HepG2 (cell line): ENCODE measurements at regions of chr19 and their contacts with region 1.

Region 1: GRCh38 chr19:5048091-5048726 is 79.3 kb downstream of the KDM4B start:
- DNase-seq: peak; percentile 27
- ATAC-seq: peak; percentile 75
- H3K4me3 ChIP-seq: no peak overlapping the region
- H3K27ac ChIP-seq: no peak overlapping the region
- H3K4me1 ChIP-seq: peaks cover 24% of the 10 kb centered on the region
- H3K27me3 ChIP-seq: no peaks in the 10 kb centered on the region
- CTCF ChIP-seq: peak; percentile 99
- EP300 ChIP-seq: no peak
- POLR2A ChIP-seq: no peak
- RAD21 ChIP-seq: peak; percentile 92

Region 2: GRCh38 chr19:5091018-5091683 is 42.9 kb after region 1 on chr19:
- CTCF ChIA-PET with region 1: no interaction called
- POLR2A ChIA-PET with region 1: no interaction called
- in situ Hi-C with region 1: no loop called
- intact Hi-C with region 1: no loop called
- DNase-seq: no peak
- ATAC-seq: no peak
- H3K4me3 ChIP-seq: no peak overlapping the region
- H3K27ac ChIP-seq: no peak overlapping the region
- H3K4me1 ChIP-seq: no peaks in the 10 kb centered on the region
- H3K27me3 ChIP-seq: no peaks in the 10 kb centered on the region
- CTCF ChIP-seq: no peak
- EP300 ChIP-seq: no peak
- POLR2A ChIP-seq: no peak
- RAD21 ChIP-seq: no peak

Region 3: DNA sequence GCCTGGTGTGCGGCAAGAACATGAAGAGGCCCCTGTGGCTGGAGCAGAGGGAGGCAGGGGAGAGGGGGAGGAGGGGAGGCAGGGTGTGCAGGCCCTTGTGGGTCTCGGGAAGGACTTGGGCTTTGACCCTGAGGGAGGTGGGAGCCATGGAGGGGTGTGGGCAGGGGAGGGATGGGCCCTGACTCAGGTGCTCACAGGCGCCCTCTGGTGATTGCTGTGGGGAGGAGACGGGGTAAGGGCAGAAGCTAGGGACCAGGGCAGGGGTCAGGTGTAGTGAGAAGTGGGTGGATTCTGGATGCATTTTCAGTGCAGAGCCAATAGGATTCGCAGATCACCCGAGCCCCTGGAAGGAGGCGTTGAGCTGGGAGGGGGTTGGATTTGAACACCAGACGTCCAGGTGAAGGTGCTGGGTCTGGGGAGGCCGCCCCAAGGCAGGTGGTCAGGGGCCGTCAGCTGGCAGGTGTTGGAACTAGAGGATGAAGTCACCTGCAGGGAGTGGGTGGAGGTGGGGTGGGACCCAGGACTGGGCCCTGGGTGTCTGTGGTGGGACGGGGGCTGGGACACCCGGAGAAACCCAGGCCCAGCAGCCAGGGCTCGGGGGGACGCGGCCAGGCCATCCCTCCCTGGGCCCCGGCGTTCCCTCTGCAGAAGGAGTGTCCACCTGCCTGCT is 106.1 kb after region 1 on chr19:
- CTCF ChIA-PET with region 1: interaction called, 11 read pairs
- POLR2A ChIA-PET with region 1: no interaction called
- in situ Hi-C with region 1: no loop called
- intact Hi-C with region 1: loop called (anchors 5 kb)
- DNase-seq: peak; percentile 52
- ATAC-seq: peak; percentile 84
- H3K4me3 ChIP-seq: no peak overlapping the region
- H3K27ac ChIP-seq: no peak overlapping the region
- H3K4me1 ChIP-seq: peaks cover 6% of the 10 kb centered on the region
- H3K27me3 ChIP-seq: no peaks in the 10 kb centered on the region
- CTCF ChIP-seq: peak; percentile 82
- EP300 ChIP-seq: no peak
- POLR2A ChIP-seq: no peak
- RAD21 ChIP-seq: no peak